Activated B cell treated with CpG ODN at 0.5 μM for 24 hours (primary cell): ENCODE measurements at regions of chr12 and their contacts with region 1.

Region 1: GRCh38 chr12:3073438-3074250 is 3.5 kb upstream of the TSPAN9 start:
- DNase-seq: peak; percentile 69
- ATAC-seq: peak; percentile 55
- H3K4me3 Mint-ChIP-seq: peak overlapping the region; percentile 32
- H3K27ac Mint-ChIP-seq: no peak overlapping the region
- H3K4me1 Mint-ChIP-seq: peaks cover 12% of the 10 kb centered on the region
- H3K27me3 Mint-ChIP-seq: peaks cover 16% of the 10 kb centered on the region
- CTCF ChIP-seq: peak; percentile 82

Region 2: GRCh38 chr12:3041558-3042164 is 32.0 kb before region 1 on chr12:
- CTCF ChIA-PET with region 1: interaction called, 6 read pairs
- POLR2A ChIA-PET with region 1: no interaction called
- intact Hi-C with region 1: loop called (anchors 1 kb)
- DNase-seq: no peak
- ATAC-seq: peak; percentile 70
- H3K4me3 Mint-ChIP-seq: peak overlapping the region; percentile 46
- H3K27ac Mint-ChIP-seq: peak overlapping the region; percentile 30
- H3K4me1 Mint-ChIP-seq: peaks cover 25% of the 10 kb centered on the region
- H3K27me3 Mint-ChIP-seq: peaks cover 28% of the 10 kb centered on the region
- CTCF ChIP-seq: no peak

Region 3: GRCh38 chr12:3135522-3136461 is 62.1 kb after region 1 on chr12:
- CTCF ChIA-PET with region 1: no interaction called
- POLR2A ChIA-PET with region 1: no interaction called
- intact Hi-C with region 1: loop called (anchors 5 kb)
- DNase-seq: no peak
- ATAC-seq: peak; percentile 66
- H3K4me3 Mint-ChIP-seq: no peak overlapping the region
- H3K27ac Mint-ChIP-seq: no peak overlapping the region
- H3K4me1 Mint-ChIP-seq: no peaks in the 10 kb centered on the region
- H3K27me3 Mint-ChIP-seq: peaks cover 46% of the 10 kb centered on the region
- CTCF ChIP-seq: peak; percentile 74

Region 4: GRCh38 chr12:3202734-3203446 is 129.2 kb after region 1 on chr12:
- CTCF ChIA-PET with region 1: interaction called, 5 read pairs
- POLR2A ChIA-PET with region 1: no interaction called
- intact Hi-C with region 1: loop called (anchors 1 kb)
- DNase-seq: peak; percentile 33
- ATAC-seq: peak; percentile 60
- H3K4me3 Mint-ChIP-seq: no peak overlapping the region
- H3K27ac Mint-ChIP-seq: no peak overlapping the region
- H3K4me1 Mint-ChIP-seq: peaks cover 11% of the 10 kb centered on the region
- H3K27me3 Mint-ChIP-seq: peaks cover 53% of the 10 kb centered on the region
- CTCF ChIP-seq: no peak

Region 5: DNA sequence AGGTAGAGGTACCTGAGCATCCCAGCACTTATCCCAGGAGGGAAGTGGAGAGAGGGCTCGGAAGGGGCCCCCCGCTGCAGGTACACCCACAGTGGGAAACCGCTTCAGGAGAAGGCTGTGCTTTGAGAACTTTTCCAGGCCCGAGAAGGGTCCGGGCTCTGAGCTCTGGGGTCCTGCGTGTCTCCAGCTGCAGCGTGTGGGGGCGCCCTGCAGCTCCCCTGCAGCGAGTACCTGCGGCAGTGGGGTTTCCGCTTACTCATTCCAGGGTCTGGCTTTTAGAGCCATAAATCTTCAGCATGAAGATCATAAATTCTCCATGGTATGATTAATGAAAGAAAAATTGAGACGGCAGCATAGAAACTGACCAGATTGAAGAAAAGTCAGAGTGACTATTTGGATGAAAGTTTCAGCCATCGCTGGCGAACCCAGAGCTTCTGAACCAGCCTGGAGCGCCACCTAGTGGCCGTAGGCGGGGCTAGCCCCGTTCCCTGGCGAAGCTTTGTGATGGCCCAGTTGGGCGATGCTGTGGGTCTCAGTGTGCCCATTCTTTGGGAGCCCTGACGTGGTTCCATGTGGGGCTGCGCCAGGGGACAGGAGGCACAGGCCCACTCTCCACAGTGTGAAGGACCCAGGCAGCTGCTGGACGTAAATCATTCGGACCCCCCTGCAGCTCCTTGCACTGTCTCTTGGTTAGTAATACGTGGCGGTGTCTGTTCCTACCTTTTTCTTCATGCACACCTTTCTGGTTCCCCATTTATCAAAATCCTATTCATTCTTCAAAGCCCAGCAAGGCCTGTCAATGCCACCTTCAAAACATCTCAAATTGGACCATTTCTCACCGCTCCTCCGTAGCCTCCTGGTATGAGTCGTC is 201.8 kb after region 1 on chr12:
- CTCF ChIA-PET with region 1: interaction called, 23 read pairs
- POLR2A ChIA-PET with region 1: no interaction called
- intact Hi-C with region 1: loop called (anchors 1 kb)
- DNase-seq: peak; percentile 66
- ATAC-seq: peak; percentile 57
- H3K4me3 Mint-ChIP-seq: no peak overlapping the region
- H3K27ac Mint-ChIP-seq: no peak overlapping the region
- H3K4me1 Mint-ChIP-seq: peaks cover 2% of the 10 kb centered on the region
- H3K27me3 Mint-ChIP-seq: peaks cover 30% of the 10 kb centered on the region
- CTCF ChIP-seq: peak; percentile 77

Region 6: DNA sequence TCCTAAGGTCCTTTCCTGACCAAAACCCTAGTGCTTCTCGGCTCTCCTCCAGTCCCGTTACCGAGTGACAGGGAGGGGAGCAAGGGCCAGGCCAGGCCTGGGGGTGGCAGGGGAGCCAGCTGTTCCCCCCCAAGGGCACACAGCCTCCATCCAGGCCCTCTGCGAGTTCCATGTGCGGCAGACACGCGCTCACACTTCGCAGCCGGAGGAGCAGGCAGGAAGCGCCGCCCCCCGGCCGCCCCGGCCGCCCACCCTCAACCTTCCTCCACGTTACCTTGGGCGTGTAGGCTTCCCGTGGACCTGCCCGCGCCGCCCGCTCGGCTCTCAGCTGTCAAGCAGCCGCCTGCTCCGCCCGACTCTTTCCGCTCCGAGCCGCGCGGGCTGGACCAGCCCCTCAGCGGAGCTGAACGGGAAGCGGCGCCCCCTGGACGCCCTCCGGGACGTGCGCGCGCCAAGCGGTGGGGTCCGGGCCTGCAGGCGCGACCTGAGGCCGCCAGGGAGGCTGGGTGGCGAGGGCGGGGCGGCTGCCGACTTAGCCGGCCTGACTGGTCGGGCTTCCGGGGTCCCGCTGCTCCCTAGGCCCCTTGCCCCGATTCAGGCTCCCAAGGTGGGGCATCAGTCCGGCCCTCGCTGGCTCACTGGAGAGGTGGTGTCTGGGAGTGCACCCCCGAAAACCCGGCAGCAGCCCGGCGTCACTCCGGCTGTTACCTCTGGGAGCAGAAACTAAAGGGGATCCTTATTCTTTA is 679.3 kb after region 1 on chr12 and contains the start of gene CRACR2A:
- CTCF ChIA-PET with region 1: no interaction called
- POLR2A ChIA-PET with region 1: no interaction called
- intact Hi-C with region 1: loop called (anchors 10 kb)
- DNase-seq: peak; percentile 85
- ATAC-seq: peak; percentile 87
- H3K4me3 Mint-ChIP-seq: peak within 1 kb of the TSS; percentile 88
- H3K27ac Mint-ChIP-seq: peak within 1 kb of the TSS; percentile 93
- H3K4me1 Mint-ChIP-seq: peaks cover 25% of the 10 kb centered on the region
- H3K27me3 Mint-ChIP-seq: no peaks in the 10 kb centered on the region
- CTCF ChIP-seq: no peak
- total RNA-seq, gene CRACR2A: 22.7 and 25.8 TPM in 2 replicates

Region 7: GRCh38 chr12:3863756-3864329 is 790.2 kb after region 1 on chr12:
- CTCF ChIA-PET with region 1: no interaction called
- POLR2A ChIA-PET with region 1: no interaction called
- intact Hi-C with region 1: no loop called
- DNase-seq: no peak
- ATAC-seq: no peak
- H3K4me3 Mint-ChIP-seq: no peak overlapping the region
- H3K27ac Mint-ChIP-seq: no peak overlapping the region
- H3K4me1 Mint-ChIP-seq: peaks cover 6% of the 10 kb centered on the region
- H3K27me3 Mint-ChIP-seq: no peaks in the 10 kb centered on the region
- CTCF ChIP-seq: no peak

Region 8: DNA sequence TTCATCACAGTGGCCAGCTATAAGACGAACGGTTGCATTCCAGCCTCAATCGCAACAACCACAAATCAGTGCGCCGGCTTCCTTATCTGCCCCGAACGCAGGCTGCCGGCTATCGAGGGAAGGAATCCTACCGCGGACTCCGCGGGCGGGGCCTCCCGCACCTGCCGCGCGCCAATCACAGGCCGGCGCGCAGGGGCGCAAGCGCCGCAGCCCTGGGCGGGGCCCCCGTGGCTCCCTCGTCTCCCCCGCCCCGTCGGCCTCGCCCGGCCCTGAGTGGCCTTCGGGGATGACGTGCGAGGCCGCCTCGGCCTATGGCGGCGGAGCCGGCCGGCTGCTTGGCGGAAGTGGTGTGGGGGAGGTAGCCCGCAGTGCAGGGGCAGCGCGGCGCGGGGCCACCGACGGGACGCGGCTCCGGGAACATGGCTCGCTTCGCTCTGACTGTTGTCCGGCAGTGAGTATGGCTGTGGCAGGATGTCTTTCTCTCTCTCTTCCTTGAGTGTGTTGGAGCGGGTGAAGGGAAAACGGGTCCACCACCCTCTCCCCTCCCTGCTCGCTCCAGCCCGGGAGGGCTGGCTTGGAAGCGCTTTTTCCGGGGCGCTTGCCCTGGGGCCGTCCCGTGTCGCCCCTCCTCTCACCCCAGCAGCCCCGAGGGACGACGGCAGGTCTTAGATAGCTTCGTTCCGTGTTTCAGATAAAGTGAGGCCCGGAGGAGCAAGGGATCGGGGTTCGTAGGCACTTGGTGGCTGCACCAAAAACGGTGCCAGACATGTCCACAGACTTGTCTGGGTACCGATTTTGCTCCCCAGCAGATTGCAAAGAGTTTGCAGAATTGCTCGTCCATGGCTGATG is 1247.4 kb after region 1 on chr12 and contains the start of gene TIGAR:
- CTCF ChIA-PET with region 1: no interaction called
- POLR2A ChIA-PET with region 1: no interaction called
- intact Hi-C with region 1: loop called (anchors 2 kb)
- DNase-seq: peak; percentile 94
- ATAC-seq: peak; percentile 97
- H3K4me3 Mint-ChIP-seq: peak within 1 kb of the TSS; percentile 95
- H3K27ac Mint-ChIP-seq: peak within 1 kb of the TSS; percentile 92
- H3K4me1 Mint-ChIP-seq: peaks cover 34% of the 10 kb centered on the region
- H3K27me3 Mint-ChIP-seq: no peaks in the 10 kb centered on the region
- CTCF ChIP-seq: no peak
- total RNA-seq, gene TIGAR: 10.0 and 10.2 TPM in 2 replicates